OCI-LY7 (cell line): ENCODE measurements at regions of chr4 and their contacts with region 1.

Region 1: DNA sequence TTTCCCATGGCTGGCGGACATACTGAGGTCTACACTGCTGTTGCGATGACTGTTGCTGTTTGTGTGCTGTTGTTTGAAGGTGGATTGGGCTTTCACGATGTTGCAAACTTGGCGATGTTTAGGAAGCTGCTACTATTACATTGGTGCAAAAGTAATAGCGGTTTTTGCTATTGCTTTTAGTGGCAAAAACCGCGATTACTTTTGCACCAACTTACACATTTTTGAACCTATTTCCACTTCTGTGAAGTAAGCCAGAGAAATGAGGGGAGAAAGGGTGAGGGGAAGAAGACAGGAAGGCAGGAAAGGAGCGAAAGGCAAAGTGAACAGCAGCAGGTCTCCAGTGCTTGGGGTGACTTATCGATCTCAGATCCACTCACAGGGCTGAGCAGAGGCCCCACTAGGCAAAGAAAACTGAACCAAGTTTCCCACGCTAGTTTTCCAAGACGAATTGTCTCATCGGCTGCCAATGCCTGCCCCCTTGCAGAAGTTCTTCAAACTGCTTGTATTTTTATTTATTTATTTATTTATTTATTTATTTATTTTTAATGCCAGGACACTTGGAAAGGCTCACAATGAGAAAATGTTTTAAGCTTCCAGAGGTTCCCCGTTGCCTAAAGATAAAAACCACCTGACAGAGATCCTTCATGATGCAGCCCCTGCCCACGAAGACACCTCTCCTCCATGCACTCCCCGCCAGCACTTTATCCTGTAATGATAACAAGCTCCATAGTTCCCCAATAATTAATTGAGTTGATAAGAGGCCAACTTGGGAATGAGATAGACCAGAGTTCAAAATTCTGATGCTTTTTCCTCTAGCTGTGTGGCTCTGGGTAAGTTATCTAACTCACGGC is 43.3 kb downstream of the QDPR start:
- DNase-seq: peak; percentile 15
- H3K4me3 ChIP-seq: no peak overlapping the region
- H3K27ac ChIP-seq: no peak overlapping the region
- H3K4me1 ChIP-seq: no peaks in the 10 kb centered on the region
- CTCF ChIP-seq: no peak; the same call in 1 of the 2 replicates

Region 2: GRCh38 chr4:16289897-16290554 is 1178.6 kb before region 1 on chr4:
- CTCF ChIA-PET with region 1: no interaction called
- POLR2A ChIA-PET with region 1: no interaction called
- intact Hi-C with region 1: loop called (anchors 5 kb)
- DNase-seq: peak; percentile 36
- H3K4me3 ChIP-seq: no peak overlapping the region
- H3K27ac ChIP-seq: no peak overlapping the region
- H3K4me1 ChIP-seq: no peaks in the 10 kb centered on the region
- CTCF ChIP-seq: peak; percentile 90

Region 3: GRCh38 chr4:16916719-16917337 is 551.8 kb before region 1 on chr4:
- CTCF ChIA-PET with region 1: no interaction called
- POLR2A ChIA-PET with region 1: no interaction called
- intact Hi-C with region 1: loop called (anchors 5 kb)
- DNase-seq: peak; percentile 71
- H3K4me3 ChIP-seq: no peak overlapping the region
- H3K27ac ChIP-seq: no peak overlapping the region
- H3K4me1 ChIP-seq: no peaks in the 10 kb centered on the region
- CTCF ChIP-seq: peak; percentile 96

Region 4: GRCh38 chr4:17155486-17155885 is 313.1 kb before region 1 on chr4:
- CTCF ChIA-PET with region 1: no interaction called
- POLR2A ChIA-PET with region 1: no interaction called
- intact Hi-C with region 1: loop called (anchors 10 kb)
- DNase-seq: no peak
- H3K4me3 ChIP-seq: no peak overlapping the region
- H3K27ac ChIP-seq: no peak overlapping the region
- H3K4me1 ChIP-seq: no peaks in the 10 kb centered on the region
- CTCF ChIP-seq: no peak

Region 5: GRCh38 chr4:17347445-17347844 is 121.2 kb before region 1 on chr4:
- CTCF ChIA-PET with region 1: no interaction called
- POLR2A ChIA-PET with region 1: no interaction called
- intact Hi-C with region 1: loop called (anchors 1 kb)
- DNase-seq: peak; percentile 71
- H3K4me3 ChIP-seq: no peak overlapping the region
- H3K27ac ChIP-seq: no peak overlapping the region
- H3K4me1 ChIP-seq: no peaks in the 10 kb centered on the region
- CTCF ChIP-seq: peak; percentile 86

Region 6: DNA sequence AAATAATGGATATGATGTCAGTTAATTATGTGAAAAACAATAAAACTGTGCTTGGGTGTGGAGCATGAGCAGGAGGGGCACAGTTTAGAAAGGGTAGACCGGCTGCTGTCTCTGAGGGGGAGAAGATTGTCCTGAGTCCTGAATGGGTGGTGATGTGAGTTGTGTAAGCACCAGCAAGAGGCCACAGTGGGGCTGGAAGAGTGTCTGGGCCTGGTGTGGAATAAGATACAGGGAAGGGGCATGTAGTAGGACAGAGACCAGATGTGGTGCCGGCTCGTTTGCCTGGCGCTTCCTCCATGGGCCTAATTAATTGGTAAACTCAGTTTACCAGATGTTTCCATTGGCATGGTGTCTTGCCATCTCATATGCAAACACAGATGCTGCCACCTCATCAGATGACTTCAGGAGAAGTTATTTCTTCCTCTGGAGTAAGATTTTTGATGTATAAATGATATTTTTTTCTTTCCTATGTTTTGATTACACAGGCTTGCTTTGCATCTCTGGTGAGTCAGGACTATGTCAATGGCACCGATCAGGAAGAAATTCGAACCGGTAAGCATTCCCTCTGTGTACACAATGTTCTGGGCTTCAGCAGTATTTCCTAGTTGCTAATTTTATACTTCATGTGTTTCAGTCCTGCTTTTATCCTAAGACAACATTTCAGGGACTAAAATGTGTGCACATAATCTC is 151.0 kb after region 1 on chr4:
- CTCF ChIA-PET with region 1: no interaction called
- POLR2A ChIA-PET with region 1: no interaction called
- intact Hi-C with region 1: no loop called
- DNase-seq: no peak
- H3K4me3 ChIP-seq: no peak overlapping the region
- H3K27ac ChIP-seq: no peak overlapping the region
- H3K4me1 ChIP-seq: peaks cover 27% of the 10 kb centered on the region
- CTCF ChIP-seq: no peak